Activated T-helper 1 cell treated with anti-CD3 and anti-CD28 coated beads, Interleukin-12 subunit alpha, Interleukin-12 subunit beta, Interleukin-2, Interleukin-4 antibody, amounts not matched to agents 30 ng/mL and 10 ng/mL and 1 ng/mL, durations not matched to agents 14 hours and 24 hours and 36 hours (primary cell): ENCODE measurements at regions of chr4 and their contacts with region 1.

Region 1: DNA sequence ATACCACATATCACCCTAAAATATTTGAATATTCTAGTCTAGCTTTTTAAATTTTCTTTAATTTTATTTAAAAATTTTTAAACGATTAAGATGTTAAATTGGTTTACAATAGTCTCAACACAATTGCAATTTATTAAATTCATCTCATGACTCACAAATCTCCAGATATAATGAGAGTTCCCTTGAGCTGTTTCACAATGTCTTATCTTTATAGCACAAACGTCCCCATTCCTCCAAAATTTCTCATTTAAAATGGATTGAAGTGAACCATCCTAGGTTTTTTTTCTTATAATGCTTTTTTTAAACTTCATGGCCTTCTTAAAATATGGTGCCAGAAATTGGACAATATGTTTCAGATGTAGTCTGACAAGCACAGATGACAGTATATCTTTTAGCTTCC is 204.4 kb downstream of the GABRB1 start:
- DNase-seq: no peak
- H3K4me3 Mint-ChIP-seq: no peak overlapping the region
- H3K27ac Mint-ChIP-seq: no peak overlapping the region
- H3K4me1 Mint-ChIP-seq: no peaks in the 10 kb centered on the region
- H3K27me3 Mint-ChIP-seq: no peaks in the 10 kb centered on the region

Region 2: DNA sequence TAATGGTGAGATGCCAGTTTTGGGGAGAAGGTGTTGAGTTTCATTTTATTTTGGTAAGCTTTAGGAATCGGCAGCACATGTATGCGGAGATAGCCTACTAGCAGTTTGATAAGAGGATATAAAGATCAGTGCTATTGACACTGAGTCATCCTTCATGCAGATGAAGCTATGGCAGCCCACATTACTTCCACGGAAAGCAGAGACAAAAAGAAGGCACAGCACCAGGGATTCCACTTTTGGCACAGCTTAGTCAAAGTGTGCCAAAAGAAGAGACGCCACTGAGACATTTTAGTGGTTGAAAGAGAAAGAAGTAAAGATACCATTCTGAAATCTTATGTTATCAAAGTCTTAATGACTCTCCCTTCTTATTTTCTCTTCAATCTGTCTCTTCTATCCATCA is 100.5 kb before region 1 on chr4:
- intact Hi-C with region 1: no loop called
- DNase-seq: no peak
- H3K4me3 Mint-ChIP-seq: no peak overlapping the region
- H3K27ac Mint-ChIP-seq: no peak overlapping the region
- H3K4me1 Mint-ChIP-seq: no peaks in the 10 kb centered on the region
- H3K27me3 Mint-ChIP-seq: no peaks in the 10 kb centered on the region

Region 3: GRCh38 chr4:47184083-47184482 is 51.6 kb before region 1 on chr4:
- intact Hi-C with region 1: loop called (anchors 2 kb)
- DNase-seq: no peak
- H3K4me3 Mint-ChIP-seq: no peak overlapping the region
- H3K27ac Mint-ChIP-seq: no peak overlapping the region
- H3K4me1 Mint-ChIP-seq: no peaks in the 10 kb centered on the region
- H3K27me3 Mint-ChIP-seq: no peaks in the 10 kb centered on the region

Region 4: DNA sequence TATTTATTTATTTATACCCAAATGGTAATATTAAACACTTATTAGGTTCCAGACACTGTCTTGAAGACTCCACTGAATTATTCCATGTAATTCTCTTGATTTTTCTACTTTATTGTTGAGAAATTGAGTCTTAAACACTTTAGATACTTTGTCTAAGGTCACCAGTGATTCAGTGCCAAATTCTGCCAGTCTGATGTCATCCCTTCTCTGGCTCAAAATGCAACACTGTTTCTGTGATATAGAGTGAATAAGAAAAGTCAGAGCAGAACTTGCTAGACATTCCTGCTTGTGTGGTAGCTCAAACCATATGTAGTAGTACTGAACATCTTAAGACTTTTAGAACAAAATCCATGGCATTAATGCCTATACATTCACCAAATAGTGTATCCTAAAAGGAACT is 40.0 kb before region 1 on chr4:
- intact Hi-C with region 1: no loop called
- DNase-seq: no peak
- H3K4me3 Mint-ChIP-seq: no peak overlapping the region
- H3K27ac Mint-ChIP-seq: no peak overlapping the region
- H3K4me1 Mint-ChIP-seq: no peaks in the 10 kb centered on the region
- H3K27me3 Mint-ChIP-seq: no peaks in the 10 kb centered on the region

Region 5: DNA sequence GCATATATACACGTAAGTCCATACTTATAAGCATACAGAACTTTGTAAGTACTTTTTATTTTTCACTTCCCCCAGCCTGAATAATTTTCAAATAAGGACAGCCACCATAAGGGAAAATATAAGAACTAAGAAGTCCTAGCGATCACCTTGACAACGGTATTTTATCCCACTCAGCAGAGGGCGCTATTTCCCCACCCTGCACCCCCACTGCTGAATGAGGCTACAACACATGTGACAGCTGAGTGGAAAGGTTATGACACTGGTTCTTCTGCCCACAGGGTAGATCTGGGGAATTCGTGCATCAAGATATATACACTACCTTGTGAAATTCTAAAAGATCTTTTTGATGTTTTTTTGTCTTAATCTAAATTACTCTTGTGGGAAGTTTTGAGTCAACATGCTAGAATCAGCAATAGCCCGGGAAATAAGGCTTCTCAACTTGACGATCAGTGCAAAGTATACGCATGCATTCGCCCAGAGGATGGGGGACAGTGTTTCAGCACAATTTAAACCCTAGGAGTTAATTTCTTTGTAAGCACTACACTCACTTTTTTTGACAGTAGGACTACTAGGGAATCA is 450.7 kb after region 1 on chr4:
- intact Hi-C with region 1: no loop called
- DNase-seq: peak; percentile 29
- H3K4me3 Mint-ChIP-seq: no peak overlapping the region
- H3K27ac Mint-ChIP-seq: no peak overlapping the region
- H3K4me1 Mint-ChIP-seq: no peaks in the 10 kb centered on the region
- H3K27me3 Mint-ChIP-seq: peaks cover 8% of the 10 kb centered on the region